Esophagus muscularis mucosa (tissue), 4 donors: ENCODE measurements at regions of chr7 and their contacts with region 1.

Region 1: GRCh38 chr7:128209229-128210035 is 31.6 kb upstream of the LEP start:
- DNase-seq: no peak
- H3K4me3 ChIP-seq: no peak overlapping the region
- H3K27ac ChIP-seq: no peak overlapping the region
- H3K4me1 ChIP-seq: peaks cover 0 to 13% (median 5%) of the 10 kb centered on the region in 4 donors
- H3K27me3 ChIP-seq: peaks cover 0 to 75% (median 0%) of the 10 kb centered on the region in 4 donors
- CTCF ChIP-seq: peak; percentile 97 to 99 (median 98)
- EP300 ChIP-seq: no peak
- POLR2A ChIP-seq: no peak

Region 2: GRCh38 chr7:126948664-126949063 is 1260.8 kb before region 1 on chr7:
- intact Hi-C with region 1: no loop called
- DNase-seq: no peak
- H3K4me3 ChIP-seq: no peak overlapping the region
- H3K27ac ChIP-seq: no peak overlapping the region
- H3K4me1 ChIP-seq: no peaks in the 10 kb centered on the region
- H3K27me3 ChIP-seq: no peaks in the 10 kb centered on the region
- CTCF ChIP-seq: no peak
- EP300 ChIP-seq: no peak
- POLR2A ChIP-seq: no peak

Region 3: GRCh38 chr7:128135515-128136214 is 73.8 kb before region 1 on chr7:
- intact Hi-C with region 1: loop called (anchors 1 kb)
- DNase-seq: peak; percentile 91
- H3K4me3 ChIP-seq: peak overlapping the region; percentile 53 to 81 (median 60)
- H3K27ac ChIP-seq: no peak overlapping the region
- H3K4me1 ChIP-seq: peaks cover 18 to 23% (median 21%) of the 10 kb centered on the region in 4 donors
- H3K27me3 ChIP-seq: peaks cover 0 to 59% (median 16%) of the 10 kb centered on the region in 4 donors
- CTCF ChIP-seq: peak; percentile 73 to 100 (median 84)
- EP300 ChIP-seq: no peak
- POLR2A ChIP-seq: no peak